ENCODE measurements at regions of chr9 and their contacts with region 1.

Region 1: GRCh38 chr9:126558051-126558665 is 55.6 kb upstream of the LMX1B start:
- DNase-seq: no peak
- H3K4me3 ChIP-seq: no peak overlapping the region
- H3K27ac ChIP-seq: no peak overlapping the region
- H3K27me3 ChIP-seq: peaks cover 24% of the 10 kb centered on the region
- CTCF ChIP-seq: peak; percentile 96

Region 2: GRCh38 chr9:126055381-126055985 is 502.7 kb before region 1 on chr9:
- CTCF ChIA-PET with region 1: no interaction called
- POLR2A ChIA-PET with region 1: no interaction called
- DNase-seq: no peak
- H3K4me3 ChIP-seq: no peak overlapping the region
- H3K27ac ChIP-seq: no peak overlapping the region
- H3K27me3 ChIP-seq: peaks cover 61% of the 10 kb centered on the region
- CTCF ChIP-seq: no peak

Region 3: GRCh38 chr9:126440940-126441339 is 117.2 kb before region 1 on chr9:
- CTCF ChIA-PET with region 1: no interaction called
- POLR2A ChIA-PET with region 1: no interaction called
- DNase-seq: no peak
- H3K4me3 ChIP-seq: no peak overlapping the region
- H3K27ac ChIP-seq: no peak overlapping the region
- H3K27me3 ChIP-seq: no peaks in the 10 kb centered on the region
- CTCF ChIP-seq: no peak

Region 4: DNA sequence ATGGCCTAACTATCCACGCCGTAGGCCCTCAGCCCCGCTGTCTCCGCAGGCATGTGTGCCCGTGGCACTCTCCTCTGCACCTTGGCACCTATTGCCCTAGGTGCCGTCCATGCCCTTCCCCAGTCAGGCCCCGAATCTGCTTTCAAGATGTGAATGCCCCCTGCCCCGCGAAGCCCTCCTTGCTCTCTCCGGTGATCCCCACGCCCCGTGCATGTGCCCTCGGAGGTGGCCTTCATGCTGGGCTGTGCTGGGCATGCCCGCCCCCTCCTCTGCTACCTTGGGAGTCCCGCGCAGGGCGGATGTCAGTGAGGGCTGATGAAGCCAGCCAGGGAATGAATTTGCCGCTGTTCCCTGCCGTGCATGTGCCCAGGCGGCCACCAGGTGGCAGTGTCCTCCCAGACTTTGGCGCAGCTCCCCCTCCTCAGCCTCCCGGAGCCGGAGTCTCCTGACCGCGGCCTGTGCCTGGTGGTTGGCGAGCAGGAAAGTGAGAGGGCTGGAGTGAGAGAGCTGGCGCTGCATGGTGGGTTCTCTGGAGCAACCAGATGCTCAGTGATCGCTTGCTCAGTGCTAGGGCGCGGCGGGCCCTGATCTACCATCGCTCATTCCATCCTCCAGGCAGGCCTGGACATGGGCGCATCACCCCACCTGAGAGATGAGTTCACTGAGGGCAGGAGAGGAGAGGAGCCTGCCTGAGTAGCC is 57.3 kb before region 1 on chr9:
- CTCF ChIA-PET with region 1: interaction called, 101 read pairs
- POLR2A ChIA-PET with region 1: no interaction called
- DNase-seq: peak; percentile 50
- H3K4me3 ChIP-seq: no peak overlapping the region
- H3K27ac ChIP-seq: no peak overlapping the region
- H3K27me3 ChIP-seq: peaks cover 2% of the 10 kb centered on the region
- CTCF ChIP-seq: peak; percentile 91

Region 5: DNA sequence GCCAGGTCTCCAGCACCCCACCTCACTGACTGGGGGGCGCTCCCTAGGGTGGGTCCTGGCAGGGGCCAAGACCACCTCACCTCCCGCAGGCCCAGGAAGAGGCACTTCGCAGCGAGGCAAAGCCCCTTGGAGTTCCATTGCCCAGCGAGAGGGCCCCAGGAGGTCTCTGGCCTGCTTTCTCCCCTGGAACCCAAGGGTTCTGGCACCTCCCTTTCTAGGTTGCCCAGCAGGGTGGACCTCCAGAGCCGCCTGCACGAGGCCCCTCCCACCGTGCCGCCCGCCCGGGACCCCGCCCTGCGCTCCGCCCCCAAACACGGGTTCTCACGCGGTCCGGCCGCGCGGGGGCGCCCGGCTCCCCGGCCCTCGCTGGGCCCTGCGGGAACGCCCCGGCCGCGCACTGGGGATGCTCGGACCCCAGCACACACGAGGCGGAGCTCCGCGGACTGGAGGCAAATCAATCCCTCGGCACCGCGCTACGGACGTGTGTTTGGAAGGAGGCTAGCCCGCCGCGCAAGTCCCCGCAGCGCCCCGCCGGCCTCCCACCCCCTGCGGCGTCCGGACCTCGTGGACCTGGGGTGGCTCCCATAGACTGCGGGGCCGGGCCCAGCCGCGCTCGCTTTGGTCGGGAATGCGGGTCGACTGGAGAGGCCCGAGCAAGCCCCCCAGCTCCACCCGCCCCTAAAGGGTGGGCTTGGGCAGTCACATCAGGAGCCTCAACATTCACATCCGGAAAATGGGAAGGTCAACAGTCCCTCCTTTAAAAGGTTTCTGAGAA is 43.9 kb before region 1 on chr9:
- CTCF ChIA-PET with region 1: interaction called, 12 read pairs
- POLR2A ChIA-PET with region 1: no interaction called
- DNase-seq: no peak
- H3K4me3 ChIP-seq: peak overlapping the region; percentile 39; the same call in 1 of the 2 replicates
- H3K27ac ChIP-seq: no peak overlapping the region
- H3K27me3 ChIP-seq: peaks cover 24% of the 10 kb centered on the region
- CTCF ChIP-seq: peak; percentile 32

Region 6: GRCh38 chr9:126523611-126524111 is 34.5 kb before region 1 on chr9:
- CTCF ChIA-PET with region 1: interaction called, 11 read pairs
- POLR2A ChIA-PET with region 1: no interaction called
- DNase-seq: no peak
- H3K4me3 ChIP-seq: no peak overlapping the region
- H3K27ac ChIP-seq: no peak overlapping the region
- H3K27me3 ChIP-seq: peaks cover 83% of the 10 kb centered on the region
- CTCF ChIP-seq: no peak

Region 7: DNA sequence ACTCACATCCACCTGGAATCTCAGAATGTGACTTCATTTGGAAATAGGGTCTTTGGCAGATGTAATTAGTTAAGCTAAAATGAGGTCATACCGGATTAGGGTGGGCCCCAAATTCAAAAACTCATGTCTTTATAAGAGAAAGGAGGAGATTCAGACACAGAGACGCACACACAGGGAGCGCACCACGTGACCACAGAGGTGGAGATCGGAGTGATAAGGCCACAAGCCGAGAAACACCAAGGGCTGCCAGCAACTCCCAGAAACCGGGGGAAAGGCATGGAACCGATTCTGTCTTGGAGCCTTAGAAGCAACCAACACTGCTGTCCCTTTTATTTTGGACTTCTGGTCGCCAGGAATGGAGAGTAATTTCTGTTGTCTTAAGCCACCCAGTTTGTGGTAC is 23.7 kb after region 1 on chr9:
- CTCF ChIA-PET with region 1: interaction called, 16 read pairs
- POLR2A ChIA-PET with region 1: no interaction called
- DNase-seq: no peak
- H3K4me3 ChIP-seq: no peak overlapping the region
- H3K27ac ChIP-seq: no peak overlapping the region
- H3K27me3 ChIP-seq: peaks cover 60% of the 10 kb centered on the region
- CTCF ChIP-seq: no peak

Region 8: GRCh38 chr9:126630458-126631237 is 72.5 kb after region 1 on chr9:
- CTCF ChIA-PET with region 1: interaction called, 19 read pairs
- POLR2A ChIA-PET with region 1: no interaction called
- DNase-seq: no peak
- H3K4me3 ChIP-seq: no peak overlapping the region
- H3K27ac ChIP-seq: no peak overlapping the region
- H3K27me3 ChIP-seq: peaks cover 82% of the 10 kb centered on the region
- CTCF ChIP-seq: no peak